Heart right ventricle (tissue), 16 donors: ENCODE measurements at regions of chr10 and their contacts with region 1.

Region 1: GRCh38 chr10:60816628-60817397 is 38.5 kb downstream of the CDK1 start:
- DNase-seq: peak in 1 of 2 donors; percentile 72
- ATAC-seq: peak; percentile 76 to 95 (median 90)
- H3K4me3 ChIP-seq: peak overlapping the region in 4 of 10 donors; percentile 2 to 20 (median 13)
- H3K27ac ChIP-seq: peak overlapping the region in 5 of 10 donors; percentile 22 to 56 (median 34)
- H3K4me1 ChIP-seq: peaks cover 0 to 41% (median 20%) of the 10 kb centered on the region in 9 donors
- H3K27me3 ChIP-seq: no peaks in the 10 kb centered on the region
- CTCF ChIP-seq: peak; percentile 55 to 92 (median 82)

Region 2: DNA sequence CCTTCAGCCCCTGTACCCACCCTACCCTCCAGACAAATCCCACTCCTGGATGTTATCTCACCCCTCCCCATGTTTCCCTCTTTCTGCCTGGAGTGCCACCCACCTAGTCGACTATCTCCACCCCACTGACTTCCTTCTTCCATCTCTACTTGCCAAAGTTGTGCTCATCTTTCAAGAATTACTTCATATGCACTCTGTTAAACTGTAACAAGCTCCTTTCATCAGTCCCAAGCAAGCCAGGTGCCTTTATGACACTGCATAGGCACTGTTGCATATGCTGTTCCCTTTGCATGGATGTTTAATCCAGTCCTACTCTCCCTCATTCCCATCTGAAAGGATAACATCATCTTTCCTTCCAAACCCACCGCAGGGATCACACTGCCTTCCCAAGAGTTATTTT is 47.4 kb before region 1 on chr10:
- intact Hi-C with region 1: no loop called
- DNase-seq: no peak
- ATAC-seq: no peak
- H3K4me3 ChIP-seq: no peak overlapping the region
- H3K27ac ChIP-seq: no peak overlapping the region
- H3K4me1 ChIP-seq: no peaks in the 10 kb centered on the region
- H3K27me3 ChIP-seq: no peaks in the 10 kb centered on the region
- CTCF ChIP-seq: no peak

Region 3: GRCh38 chr10:60944159-60944909 is 127.5 kb after region 1 on chr10 and contains the start of gene RHOBTB1:
- intact Hi-C with region 1: loop called in 1 of 10 experiments (anchors 5 kb)
- DNase-seq: peak; percentile 81 to 82
- ATAC-seq: peak; percentile 91 to 95 (median 92)
- H3K4me3 ChIP-seq: peak within 1 kb of the TSS; percentile 72 to 98 (median 86)
- H3K27ac ChIP-seq: peak within 1 kb of the TSS; percentile 93 to 100 (median 98)
- H3K4me1 ChIP-seq: peaks cover 3 to 43% (median 28%) of the 10 kb centered on the region in 9 donors
- H3K27me3 ChIP-seq: no peaks in the 10 kb centered on the region
- CTCF ChIP-seq: no peak
- total RNA-seq, gene RHOBTB1: 7.9 to 20.5 (median 13.4) TPM

Region 4: GRCh38 chr10:61135276-61135721 is 318.5 kb after region 1 on chr10:
- intact Hi-C with region 1: loop called in 4 of 10 experiments (anchors 5 to 10 kb)
- DNase-seq: no peak
- ATAC-seq: no peak
- H3K4me3 ChIP-seq: no peak overlapping the region
- H3K27ac ChIP-seq: no peak overlapping the region
- H3K4me1 ChIP-seq: peaks cover 0 to 15% (median 0%) of the 10 kb centered on the region in 9 donors
- H3K27me3 ChIP-seq: no peaks in the 10 kb centered on the region
- CTCF ChIP-seq: no peak

Region 5: DNA sequence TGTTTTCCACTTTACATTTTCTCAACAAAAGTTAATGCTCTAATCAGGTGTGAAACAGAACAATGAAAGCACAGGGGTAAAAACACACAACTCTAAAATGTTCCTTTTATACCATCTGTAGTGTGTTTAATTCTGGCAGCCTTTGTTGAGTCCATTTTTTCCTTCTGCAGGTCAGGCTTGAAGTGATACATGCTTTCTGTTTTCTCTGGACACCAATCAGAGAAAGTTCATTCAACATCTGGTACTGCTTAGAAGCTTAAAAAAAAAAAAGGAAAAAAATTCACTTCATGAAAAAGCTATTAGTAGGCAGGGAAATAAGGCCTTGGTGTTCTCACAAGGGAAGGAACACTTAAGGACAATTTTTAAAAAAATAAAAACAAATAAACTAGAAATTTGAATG is 358.5 kb after region 1 on chr10:
- intact Hi-C with region 1: loop called in 1 of 10 experiments (anchors 10 kb)
- DNase-seq: no peak
- ATAC-seq: peak in 7 of 8 donors; percentile 70 to 90 (median 85)
- H3K4me3 ChIP-seq: no peak overlapping the region
- H3K27ac ChIP-seq: peak overlapping the region in 7 of 10 donors; percentile 2 to 57 (median 33)
- H3K4me1 ChIP-seq: peaks cover 0 to 31% (median 25%) of the 10 kb centered on the region in 9 donors
- H3K27me3 ChIP-seq: no peaks in the 10 kb centered on the region
- CTCF ChIP-seq: no peak

Region 6: GRCh38 chr10:61284222-61284890 is 467.5 kb after region 1 on chr10:
- intact Hi-C with region 1: loop called (anchors 1 to 10 kb)
- DNase-seq: peak in 1 of 2 donors; percentile 13
- ATAC-seq: peak in 4 of 8 donors; percentile 42 to 62 (median 53)
- H3K4me3 ChIP-seq: peak overlapping the region in 1 of 10 donors; percentile 18
- H3K27ac ChIP-seq: peak overlapping the region in 1 of 10 donors; percentile 16
- H3K4me1 ChIP-seq: peaks cover 0 to 20% (median 0%) of the 10 kb centered on the region in 9 donors
- H3K27me3 ChIP-seq: no peaks in the 10 kb centered on the region
- CTCF ChIP-seq: peak; percentile 66 to 89 (median 80)

Region 7: DNA sequence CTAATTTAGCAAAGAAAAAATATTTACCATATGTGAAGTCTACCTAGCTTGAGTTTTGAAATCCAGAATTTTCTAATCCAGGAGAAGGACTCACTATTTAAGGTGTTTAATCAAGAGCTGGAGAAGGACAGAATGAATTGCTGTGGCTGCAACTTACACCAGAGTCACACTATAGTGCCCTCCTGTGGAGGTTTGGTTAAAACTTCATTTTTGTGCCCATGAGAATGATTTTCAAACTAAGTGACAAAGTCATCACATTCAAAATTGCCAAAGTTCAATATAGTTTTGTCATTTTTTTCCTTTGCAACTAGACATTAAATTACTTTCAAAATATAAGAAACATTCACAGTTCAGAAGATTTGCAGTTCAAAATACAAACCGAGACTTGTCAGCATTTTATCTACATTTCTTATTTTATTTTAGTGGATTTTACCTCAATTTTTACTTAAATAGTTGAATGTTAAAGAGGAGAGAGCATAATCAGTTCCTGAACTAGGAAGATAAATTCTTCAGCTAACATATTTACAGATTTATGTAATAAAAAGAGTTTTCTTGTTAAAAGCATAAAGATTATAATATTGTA is 916.6 kb after region 1 on chr10:
- intact Hi-C with region 1: loop called in 6 of 10 experiments (anchors 5 to 10 kb)
- DNase-seq: no peak
- ATAC-seq: no peak
- H3K4me3 ChIP-seq: no peak overlapping the region
- H3K27ac ChIP-seq: no peak overlapping the region
- H3K4me1 ChIP-seq: no peaks in the 10 kb centered on the region
- H3K27me3 ChIP-seq: no peaks in the 10 kb centered on the region
- CTCF ChIP-seq: peak; percentile 20 to 74 (median 60)